Sigmoid colon (tissue), 7 donors: ENCODE measurements at regions of chr2 and their contacts with region 1.

Region 1: DNA sequence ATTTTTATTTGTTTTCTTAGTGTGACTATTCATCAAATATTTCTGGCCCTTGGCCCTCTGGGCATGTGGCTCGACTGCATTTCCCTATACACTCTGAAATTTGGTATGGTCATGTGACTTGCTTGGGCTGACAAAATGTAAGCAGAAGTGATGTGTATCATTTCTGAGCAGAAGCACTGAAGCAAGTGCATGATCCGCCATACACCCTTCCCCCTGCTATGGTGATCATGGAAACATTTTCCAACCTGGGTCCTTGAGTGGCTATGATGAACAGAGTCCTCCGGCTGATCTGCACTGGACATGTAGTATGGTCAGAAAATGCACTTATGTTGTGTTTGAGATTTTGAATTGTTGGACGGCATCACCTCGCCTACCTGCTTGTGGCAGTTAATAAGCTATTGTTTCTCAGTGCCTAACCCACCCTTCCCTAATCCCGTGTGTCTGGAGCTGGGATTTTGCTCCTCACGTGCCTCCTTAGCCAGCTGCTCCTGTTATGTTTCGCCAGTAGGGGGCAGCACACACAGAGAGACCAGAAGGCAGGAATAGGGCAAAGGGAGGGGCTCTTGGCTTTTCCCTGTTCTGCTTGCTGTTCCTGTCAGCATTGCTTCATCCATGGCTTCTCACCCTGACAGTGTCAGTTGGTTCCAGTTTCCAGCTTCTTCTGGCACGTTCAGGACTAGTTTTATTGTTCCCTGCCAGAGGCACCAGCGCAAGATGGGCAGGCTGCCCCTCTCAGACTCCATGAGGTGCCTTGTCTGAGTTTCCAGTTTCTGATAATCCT is 207.3 kb downstream of the ARL6IP6 start:
- DNase-seq: peak; percentile 84
- H3K4me3 ChIP-seq: no peak overlapping the region
- H3K27ac ChIP-seq: no peak overlapping the region
- H3K4me1 ChIP-seq: peaks cover 0 to 16% (median 0%) of the 10 kb centered on the region in 4 donors
- H3K27me3 ChIP-seq: no peaks in the 10 kb centered on the region
- CTCF ChIP-seq: peak; percentile 53 to 69 (median 58)
- EP300 ChIP-seq: no peak
- POLR2A ChIP-seq: no peak

Region 2: DNA sequence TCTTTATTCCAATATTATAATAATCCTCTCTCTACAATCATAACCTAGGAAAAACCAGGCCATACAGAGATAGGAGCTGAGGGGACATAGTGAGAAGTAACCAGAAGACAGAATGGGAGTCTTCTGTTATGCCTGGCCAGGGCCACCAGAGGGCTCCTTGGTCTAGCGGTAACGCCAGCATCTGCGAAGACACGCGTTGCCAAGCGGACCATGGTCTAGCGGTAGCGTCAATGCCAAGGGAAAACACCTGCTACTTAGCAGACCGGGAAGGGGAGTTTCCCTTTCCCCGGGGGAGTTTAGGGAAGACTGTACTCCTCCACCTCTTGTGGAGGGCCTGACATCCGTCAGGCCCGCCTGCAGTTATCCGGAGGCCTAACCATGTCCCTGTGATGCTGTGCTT is 170.7 kb before region 1 on chr2:
- intact Hi-C with region 1: loop called (anchors 10 kb)
- DNase-seq: no peak
- H3K4me3 ChIP-seq: no peak overlapping the region
- H3K27ac ChIP-seq: no peak overlapping the region
- H3K4me1 ChIP-seq: no peaks in the 10 kb centered on the region
- H3K27me3 ChIP-seq: no peaks in the 10 kb centered on the region
- CTCF ChIP-seq: peak in 2 of 4 experiments; percentile 24 to 38
- EP300 ChIP-seq: no peak
- POLR2A ChIP-seq: no peak